ENCODE measurements at regions of chr16 and their contacts with region 1.

Region 1: GRCh38 chr16:89873972-89874689 is 739 bp downstream of the TCF25 start:
- DNase-seq: peak; percentile 93 to 97 (median 94)
- H3K4me3 ChIP-seq: peak overlapping the region in 1 of 2 donors; percentile 88
- H3K4me3 Mint-ChIP-seq: peak overlapping the region; percentile 77 to 97 (median 92)
- H3K27ac ChIP-seq: peak overlapping the region; percentile 98
- H3K27ac Mint-ChIP-seq: peak overlapping the region; percentile 96 to 99 (median 98)
- H3K4me1 ChIP-seq: peaks cover 27% of the 10 kb centered on the region
- H3K4me1 Mint-ChIP-seq: peaks cover 4 to 31% (median 17%) of the 10 kb centered on the region in 4 donors
- H3K27me3 ChIP-seq: no peaks in the 10 kb centered on the region
- H3K27me3 Mint-ChIP-seq: no peaks in the 10 kb centered on the region

Region 2: GRCh38 chr16:89560378-89561141 is 313.6 kb before region 1 on chr16 and contains the start of gene RPL13:
- CTCF ChIA-PET with region 1: no interaction called
- POLR2A ChIA-PET with region 1: no interaction called
- intact Hi-C with region 1: loop called (anchors 10 kb)
- DNase-seq: peak; percentile 91 to 94 (median 93)
- H3K4me3 ChIP-seq: peak within 1 kb of the TSS; percentile 73 to 85
- H3K4me3 Mint-ChIP-seq: peak within 1 kb of the TSS; percentile 95 to 99 (median 98)
- H3K27ac ChIP-seq: peak within 1 kb of the TSS; percentile 88
- H3K27ac Mint-ChIP-seq: peak within 1 kb of the TSS; percentile 97 to 99 (median 98)
- H3K4me1 ChIP-seq: peaks cover 58% of the 10 kb centered on the region
- H3K4me1 Mint-ChIP-seq: peaks cover 32 to 66% (median 50%) of the 10 kb centered on the region in 4 donors
- H3K27me3 ChIP-seq: no peaks in the 10 kb centered on the region
- H3K27me3 Mint-ChIP-seq: no peaks in the 10 kb centered on the region
- total RNA-seq, gene RPL13: 4,825 to 5,043 TPM

Region 3: DNA sequence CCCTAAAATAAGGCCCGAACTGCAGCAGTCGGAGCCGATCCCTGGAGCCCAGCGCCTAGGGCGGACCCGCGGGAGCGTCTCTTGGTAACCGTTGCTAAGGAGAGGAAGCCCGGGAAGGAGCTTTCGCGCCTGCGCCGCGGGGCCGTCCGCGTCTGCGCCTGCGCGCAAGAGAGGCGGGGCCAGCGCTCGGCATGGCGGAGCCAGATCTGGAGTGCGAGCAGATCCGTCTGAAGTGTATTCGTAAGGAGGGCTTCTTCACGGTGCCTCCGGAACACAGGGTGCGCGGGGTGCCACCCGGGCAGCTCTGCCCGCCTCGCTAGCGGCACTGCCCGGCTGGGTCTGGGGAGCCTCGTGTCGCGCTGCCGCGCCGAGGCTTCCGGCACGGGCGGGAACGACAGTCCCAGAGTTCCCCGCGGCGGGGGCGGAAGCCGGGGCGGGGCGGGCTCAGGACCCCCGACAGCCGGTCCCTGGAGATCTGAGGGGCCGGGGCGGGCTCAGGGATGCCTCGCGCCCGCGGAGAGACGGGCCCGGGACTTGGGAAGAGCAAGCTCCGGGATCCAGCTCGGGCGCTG is 187.5 kb before region 1 on chr16 and contains the start of gene CDK10:
- CTCF ChIA-PET with region 1: no interaction called
- POLR2A ChIA-PET with region 1: interaction called, 16 read pairs
- intact Hi-C with region 1: no loop called
- DNase-seq: peak; percentile 78 to 95 (median 87)
- H3K4me3 ChIP-seq: peak within 1 kb of the TSS; percentile 57 to 84
- H3K4me3 Mint-ChIP-seq: peak within 1 kb of the TSS; percentile 84 to 96 (median 92)
- H3K27ac ChIP-seq: peak within 1 kb of the TSS; percentile 84
- H3K27ac Mint-ChIP-seq: peak within 1 kb of the TSS; percentile 78 to 98 (median 94)
- H3K4me1 ChIP-seq: peaks cover 14% of the 10 kb centered on the region
- H3K4me1 Mint-ChIP-seq: peaks cover 9 to 25% (median 13%) of the 10 kb centered on the region in 4 donors
- H3K27me3 ChIP-seq: no peaks in the 10 kb centered on the region
- H3K27me3 Mint-ChIP-seq: no peaks in the 10 kb centered on the region
- total RNA-seq, gene CDK10: 134 to 140 TPM

Region 4: DNA sequence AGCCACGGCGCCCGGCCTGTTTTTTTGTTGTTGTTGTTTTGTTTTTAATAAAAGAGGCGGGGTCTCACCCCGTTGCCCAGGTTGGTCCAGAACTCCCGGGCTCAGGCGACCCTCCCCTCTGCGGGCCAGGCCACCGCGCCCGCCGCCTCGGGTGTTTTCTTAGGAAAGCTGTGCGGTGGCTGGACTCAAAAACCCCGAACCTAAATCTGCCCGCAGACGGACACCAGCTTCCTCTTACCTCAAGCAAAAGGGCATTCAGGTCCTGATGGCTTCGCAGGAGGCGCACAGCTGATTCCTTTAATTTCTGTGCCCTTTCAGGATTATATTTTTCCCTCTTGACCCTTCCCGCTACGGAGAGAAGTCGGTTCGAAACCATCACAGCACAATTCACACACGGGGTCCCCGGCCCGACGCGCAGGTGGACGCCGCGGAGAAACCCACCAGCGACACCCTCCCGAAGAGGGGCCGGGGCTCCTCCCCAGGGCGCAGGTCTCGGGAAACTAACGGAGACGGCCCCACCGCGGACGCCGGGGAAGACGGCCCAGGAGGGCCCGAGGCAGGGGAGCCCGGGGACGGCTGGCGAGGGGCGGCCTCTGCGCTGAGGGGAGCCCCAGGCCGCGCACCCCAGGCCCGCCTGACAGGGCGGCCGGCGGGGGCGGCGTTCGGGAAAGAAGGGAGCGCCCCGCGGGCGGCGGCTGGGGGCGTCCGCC is 58.3 kb before region 1 on chr16:
- CTCF ChIA-PET with region 1: no interaction called
- POLR2A ChIA-PET with region 1: interaction called, 17 read pairs
- intact Hi-C with region 1: loop called (anchors 1 kb)
- DNase-seq: no peak
- H3K4me3 ChIP-seq: peak overlapping the region in 1 of 2 donors; percentile 83
- H3K4me3 Mint-ChIP-seq: peak overlapping the region; percentile 71 to 85 (median 82)
- H3K27ac ChIP-seq: no peak overlapping the region
- H3K27ac Mint-ChIP-seq: peak overlapping the region in 2 of 7 donors; percentile 37 to 46
- H3K4me1 ChIP-seq: peaks cover 28% of the 10 kb centered on the region
- H3K4me1 Mint-ChIP-seq: peaks cover 7 to 22% (median 8%) of the 10 kb centered on the region in 4 donors
- H3K27me3 ChIP-seq: no peaks in the 10 kb centered on the region
- H3K27me3 Mint-ChIP-seq: no peaks in the 10 kb centered on the region

Region 5: DNA sequence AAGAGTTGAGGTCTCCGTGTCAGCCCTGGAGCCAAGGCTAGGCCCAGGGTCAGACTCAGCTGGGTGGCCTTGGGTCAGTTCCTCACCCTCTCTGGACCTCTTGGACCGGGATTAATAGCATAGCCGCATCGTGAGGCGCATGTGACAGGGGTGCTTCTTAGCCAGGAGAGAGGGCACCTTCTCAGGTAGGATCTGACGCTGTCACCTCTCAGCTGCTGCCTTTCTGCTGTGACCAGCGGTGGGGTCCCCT is 36.9 kb before region 1 on chr16:
- CTCF ChIA-PET with region 1: no interaction called
- POLR2A ChIA-PET with region 1: interaction called, 11 read pairs
- intact Hi-C with region 1: no loop called
- DNase-seq: no peak
- H3K4me3 ChIP-seq: peak overlapping the region in 1 of 2 donors; percentile 30
- H3K4me3 Mint-ChIP-seq: peak overlapping the region; percentile 58 to 82 (median 74)
- H3K27ac ChIP-seq: no peak overlapping the region
- H3K27ac Mint-ChIP-seq: peak overlapping the region in 1 of 7 donors; percentile 47
- H3K4me1 ChIP-seq: peaks cover 19% of the 10 kb centered on the region
- H3K4me1 Mint-ChIP-seq: peaks cover 6 to 23% (median 14%) of the 10 kb centered on the region in 4 donors
- H3K27me3 ChIP-seq: no peaks in the 10 kb centered on the region
- H3K27me3 Mint-ChIP-seq: peaks cover 0 to 3% of the 10 kb centered on the region in 2 donors

Region 6: GRCh38 chr16:89847056-89847939 is 26.8 kb before region 1 on chr16:
- CTCF ChIA-PET with region 1: no interaction called
- POLR2A ChIA-PET with region 1: no interaction called
- intact Hi-C with region 1: no loop called
- DNase-seq: no peak
- H3K4me3 ChIP-seq: no peak overlapping the region
- H3K4me3 Mint-ChIP-seq: no peak overlapping the region
- H3K27ac ChIP-seq: no peak overlapping the region
- H3K27ac Mint-ChIP-seq: no peak overlapping the region
- H3K4me1 ChIP-seq: peaks cover 9% of the 10 kb centered on the region
- H3K4me1 Mint-ChIP-seq: peaks cover 1 to 8% (median 7%) of the 10 kb centered on the region in 4 donors
- H3K27me3 ChIP-seq: no peaks in the 10 kb centered on the region
- H3K27me3 Mint-ChIP-seq: no peaks in the 10 kb centered on the region

Region 7: DNA sequence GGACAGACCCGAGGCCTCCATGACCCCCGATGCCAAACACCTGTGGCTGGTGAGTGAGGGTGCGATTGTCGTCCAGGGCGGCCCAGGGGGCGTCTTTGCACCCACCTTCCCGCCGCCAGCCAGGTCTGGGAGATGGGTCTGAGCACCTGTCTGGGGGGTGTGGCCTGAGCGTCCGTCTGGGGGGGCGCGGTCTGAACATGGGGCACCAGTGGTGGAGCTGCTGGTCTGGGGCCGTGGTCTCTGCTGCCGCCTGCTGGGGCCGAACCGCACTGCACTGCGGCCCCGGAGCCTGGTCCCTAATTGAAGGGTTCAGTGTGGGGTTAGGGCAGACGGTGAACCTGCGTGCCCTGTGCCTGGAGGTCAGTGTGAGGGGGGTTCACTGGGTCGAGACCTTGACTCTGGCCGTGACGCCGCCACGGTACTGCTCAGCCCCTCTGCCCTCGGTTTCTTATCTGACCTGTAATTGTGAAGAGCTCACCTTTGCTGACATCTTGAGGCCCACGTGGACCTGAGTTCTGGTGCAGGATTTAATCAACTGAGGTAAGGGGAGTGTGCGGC is 13.3 kb before region 1 on chr16:
- CTCF ChIA-PET with region 1: interaction called, 49 read pairs
- POLR2A ChIA-PET with region 1: interaction called, 117 read pairs
- intact Hi-C with region 1: loop called (anchors 1 kb)
- DNase-seq: peak; percentile 71 to 80 (median 74)
- H3K4me3 ChIP-seq: no peak overlapping the region
- H3K4me3 Mint-ChIP-seq: peak overlapping the region in 2 of 8 donors; percentile 30 to 39
- H3K27ac ChIP-seq: no peak overlapping the region
- H3K27ac Mint-ChIP-seq: peak overlapping the region in 5 of 7 donors; percentile 44 to 85 (median 80)
- H3K4me1 ChIP-seq: peaks cover 41% of the 10 kb centered on the region
- H3K4me1 Mint-ChIP-seq: peaks cover 27 to 42% (median 34%) of the 10 kb centered on the region in 4 donors
- H3K27me3 ChIP-seq: no peaks in the 10 kb centered on the region
- H3K27me3 Mint-ChIP-seq: no peaks in the 10 kb centered on the region

Region 8: DNA sequence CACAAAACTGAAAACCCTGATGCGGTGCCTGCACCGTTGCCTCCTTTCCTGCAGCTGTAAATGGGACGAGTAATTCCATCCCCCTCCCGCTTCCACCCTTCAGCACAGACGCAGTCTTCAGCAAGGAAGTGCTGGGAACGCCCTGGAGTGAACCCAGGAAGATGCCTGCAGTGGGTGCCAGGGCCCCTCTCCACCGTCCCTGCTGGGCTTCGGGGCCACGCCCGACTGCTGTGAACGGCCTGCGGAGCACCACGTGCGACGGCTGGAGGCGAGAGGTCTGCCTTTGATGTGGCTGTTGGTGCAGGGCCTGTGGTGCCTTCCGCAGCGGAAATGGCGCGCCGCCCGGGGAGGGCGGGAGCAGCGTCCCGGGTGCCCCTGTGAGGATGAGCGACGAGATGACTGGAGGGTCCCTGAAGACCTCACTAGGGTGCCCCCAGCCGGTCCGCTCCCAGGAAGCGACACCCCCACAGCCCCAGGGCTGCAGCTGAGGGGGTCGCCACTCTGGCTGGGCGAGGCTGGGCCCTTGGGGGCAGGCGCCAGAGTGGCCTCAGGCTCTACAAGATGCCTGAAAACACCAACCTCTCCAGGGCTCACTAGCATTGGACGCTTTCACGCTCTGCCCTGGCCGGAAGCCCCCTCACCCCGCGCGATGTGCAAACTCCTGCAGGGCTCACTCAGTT is 43.8 kb after region 1 on chr16:
- CTCF ChIA-PET with region 1: no interaction called
- POLR2A ChIA-PET with region 1: interaction called, 7 read pairs
- intact Hi-C with region 1: loop called (anchors 1 kb)
- DNase-seq: peak; percentile 82 to 89 (median 83)
- H3K4me3 ChIP-seq: peak overlapping the region; percentile 23 to 52
- H3K4me3 Mint-ChIP-seq: peak overlapping the region; percentile 64 to 80 (median 75)
- H3K27ac ChIP-seq: no peak overlapping the region
- H3K27ac Mint-ChIP-seq: peak overlapping the region in 4 of 7 donors; percentile 65 to 81 (median 74)
- H3K4me1 ChIP-seq: peaks cover 52% of the 10 kb centered on the region
- H3K4me1 Mint-ChIP-seq: peaks cover 26 to 61% (median 41%) of the 10 kb centered on the region in 4 donors
- H3K27me3 ChIP-seq: peaks cover 3% of the 10 kb centered on the region
- H3K27me3 Mint-ChIP-seq: peaks cover 0 to 9% of the 10 kb centered on the region in 2 donors